Endothelial cell of umbilical vein (primary cell): ENCODE measurements at regions of chr14 and their contacts with region 1.

Region 1: DNA sequence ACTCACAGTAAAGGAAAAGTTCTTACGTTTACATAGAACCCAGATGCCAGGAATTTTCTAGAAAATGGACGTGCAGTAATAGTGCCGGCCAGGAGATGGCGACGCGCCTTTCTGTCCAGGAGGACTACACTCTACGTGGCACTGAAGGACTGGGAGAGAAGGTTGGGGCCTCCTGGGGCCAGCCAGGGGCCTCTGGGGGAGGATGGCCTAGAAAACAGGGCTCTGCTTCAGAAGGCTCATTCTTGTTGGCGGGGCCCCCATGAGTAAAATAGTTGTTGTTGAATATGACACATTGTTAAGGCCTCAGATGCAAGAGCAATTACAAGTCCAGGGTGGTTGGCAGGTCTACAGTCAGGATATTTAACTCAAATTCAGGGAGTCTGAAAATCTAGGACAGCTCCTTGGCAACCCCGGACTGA is 120.1 kb upstream of the MAX start:
- DNase-seq: peak; percentile 80
- H3K4me3 ChIP-seq: no peak overlapping the region
- H3K27ac ChIP-seq: no peak overlapping the region
- H3K4me1 ChIP-seq: peaks cover 4% of the 10 kb centered on the region
- H3K27me3 ChIP-seq: no peaks in the 10 kb centered on the region
- CTCF ChIP-seq: peak; percentile 82
- POLR2A ChIP-seq: no peak

Region 2: GRCh38 chr14:65359503-65359902 is 137.1 kb after region 1 on chr14:
- CTCF ChIA-PET with region 1: interaction called, 8 read pairs
- POLR2A ChIA-PET with region 1: no interaction called
- dilution Hi-C with region 1: no loop called
- intact Hi-C with region 1: loop called (anchors 2 kb)
- DNase-seq: peak; percentile 62
- H3K4me3 ChIP-seq: no peak overlapping the region
- H3K27ac ChIP-seq: no peak overlapping the region
- H3K4me1 ChIP-seq: peaks cover 13% of the 10 kb centered on the region
- H3K27me3 ChIP-seq: no peaks in the 10 kb centered on the region
- CTCF ChIP-seq: no peak
- POLR2A ChIP-seq: no peak

Region 3: GRCh38 chr14:65604936-65605335 is 382.5 kb after region 1 on chr14:
- CTCF ChIA-PET with region 1: no interaction called
- POLR2A ChIA-PET with region 1: no interaction called
- dilution Hi-C with region 1: no loop called
- intact Hi-C with region 1: loop called (anchors 1 kb)
- DNase-seq: peak; percentile 15
- H3K4me3 ChIP-seq: no peak overlapping the region
- H3K27ac ChIP-seq: no peak overlapping the region
- H3K4me1 ChIP-seq: no peaks in the 10 kb centered on the region
- H3K27me3 ChIP-seq: no peaks in the 10 kb centered on the region
- CTCF ChIP-seq: no peak
- POLR2A ChIP-seq: no peak

Region 4: DNA sequence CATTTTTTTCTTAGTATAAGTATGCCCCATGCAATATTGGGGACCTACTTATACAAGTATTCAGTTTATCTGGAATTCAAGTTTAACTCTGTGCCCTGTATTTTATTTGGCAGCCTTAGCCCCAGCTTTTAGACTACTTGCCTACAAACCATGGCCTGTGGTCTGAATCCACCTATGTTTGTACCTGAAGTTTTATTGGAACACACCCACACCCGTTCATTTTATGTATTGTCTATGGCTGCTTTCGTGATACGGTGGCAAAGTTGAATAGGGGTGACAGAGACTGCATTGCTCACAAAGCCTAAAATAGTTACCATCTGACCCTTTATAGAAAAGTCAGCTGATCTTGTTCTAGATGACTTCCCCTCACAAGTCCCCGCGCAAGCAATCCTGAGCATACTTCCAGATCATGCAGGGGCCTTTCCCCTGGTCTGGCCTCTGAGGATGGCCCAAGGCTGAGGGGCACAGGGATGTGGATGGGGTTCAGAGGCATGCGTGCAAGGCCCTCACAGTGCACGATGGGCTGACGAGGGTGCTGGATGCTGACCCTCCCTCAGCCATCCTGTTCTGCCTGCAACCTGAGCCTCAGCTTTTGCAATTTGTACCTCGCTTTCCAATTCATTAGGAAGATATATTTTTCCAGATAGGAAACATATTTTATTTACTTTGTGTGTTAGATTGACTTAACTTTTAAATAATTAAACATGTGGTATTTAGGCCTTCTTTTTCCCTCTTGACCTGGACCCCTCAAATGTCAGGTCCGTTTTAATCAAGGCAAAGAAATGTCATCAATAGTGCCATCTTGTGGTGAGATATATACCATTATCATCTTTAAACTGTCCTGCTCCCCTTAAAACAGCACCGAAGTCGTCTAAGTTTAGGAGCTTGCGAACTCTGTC is 736.5 kb after region 1 on chr14:
- CTCF ChIA-PET with region 1: no interaction called
- POLR2A ChIA-PET with region 1: no interaction called
- dilution Hi-C with region 1: no loop called
- intact Hi-C with region 1: loop called (anchors 1 kb)
- DNase-seq: peak; percentile 35
- H3K4me3 ChIP-seq: no peak overlapping the region
- H3K27ac ChIP-seq: no peak overlapping the region
- H3K4me1 ChIP-seq: no peaks in the 10 kb centered on the region
- H3K27me3 ChIP-seq: no peaks in the 10 kb centered on the region
- CTCF ChIP-seq: peak; percentile 5 to 16
- POLR2A ChIP-seq: no peak

Region 5: GRCh38 chr14:66070509-66071319 is 848.3 kb after region 1 on chr14:
- CTCF ChIA-PET with region 1: no interaction called
- POLR2A ChIA-PET with region 1: no interaction called
- dilution Hi-C with region 1: no loop called
- intact Hi-C with region 1: loop called (anchors 2 kb)
- DNase-seq: peak; percentile 39
- H3K4me3 ChIP-seq: no peak overlapping the region
- H3K27ac ChIP-seq: no peak overlapping the region
- H3K4me1 ChIP-seq: no peaks in the 10 kb centered on the region
- H3K27me3 ChIP-seq: peaks cover 0 to 6% of the 10 kb centered on the region in 2 experiments
- CTCF ChIP-seq: peak; percentile 78 to 88
- POLR2A ChIP-seq: no peak